Keratinocyte (primary cell): ENCODE measurements at regions of chr20 and their contacts with region 1.

Region 1: DNA sequence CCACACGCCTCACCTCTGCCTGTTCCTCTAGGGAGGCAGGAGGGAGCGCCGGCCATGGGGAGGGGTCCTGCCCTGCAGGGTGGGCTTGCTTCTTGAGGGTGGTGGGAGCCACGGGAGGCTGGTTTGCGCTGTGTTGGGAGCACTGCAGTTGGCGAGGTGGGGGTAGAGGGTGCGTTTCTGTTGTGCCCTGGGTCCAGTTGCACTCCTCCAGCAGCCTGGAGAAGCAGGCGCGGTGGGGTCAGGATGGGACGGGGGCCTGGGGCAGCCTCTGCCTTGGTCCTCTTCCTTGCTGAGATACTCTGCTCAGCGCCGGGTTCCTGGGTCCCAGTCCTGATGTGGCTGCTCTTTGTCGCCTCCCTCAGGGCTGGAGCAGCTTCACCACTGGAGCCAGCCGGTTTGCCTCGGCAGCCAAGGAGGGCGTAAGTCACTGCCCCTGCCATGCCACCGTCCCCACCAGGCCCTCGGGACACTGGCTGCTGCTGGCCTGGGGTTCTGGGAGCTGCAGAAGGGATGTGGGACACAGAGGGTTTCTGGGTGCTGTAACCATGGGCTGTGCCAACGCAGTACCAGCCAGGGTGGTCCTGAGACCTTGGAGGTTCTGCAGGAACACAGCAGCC is 8.4 kb downstream of the ARFGAP1 start:
- DNase-seq: no peak
- H3K4me3 ChIP-seq: no peak overlapping the region
- H3K27ac ChIP-seq: no peak overlapping the region
- H3K4me1 ChIP-seq: no peaks in the 10 kb centered on the region
- H3K27me3 ChIP-seq: no peaks in the 10 kb centered on the region
- CTCF ChIP-seq: peak; percentile 31 to 46 (median 43)

Region 2: GRCh38 chr20:63223221-63224207 is 57.5 kb before region 1 on chr20:
- dilution Hi-C with region 1: loop called (anchors 10 kb)
- DNase-seq: no peak
- H3K4me3 ChIP-seq: no peak overlapping the region
- H3K27ac ChIP-seq: no peak overlapping the region
- H3K4me1 ChIP-seq: no peaks in the 10 kb centered on the region
- H3K27me3 ChIP-seq: peaks cover 13% of the 10 kb centered on the region
- CTCF ChIP-seq: peak; percentile 80 to 88 (median 83)

Region 3: DNA sequence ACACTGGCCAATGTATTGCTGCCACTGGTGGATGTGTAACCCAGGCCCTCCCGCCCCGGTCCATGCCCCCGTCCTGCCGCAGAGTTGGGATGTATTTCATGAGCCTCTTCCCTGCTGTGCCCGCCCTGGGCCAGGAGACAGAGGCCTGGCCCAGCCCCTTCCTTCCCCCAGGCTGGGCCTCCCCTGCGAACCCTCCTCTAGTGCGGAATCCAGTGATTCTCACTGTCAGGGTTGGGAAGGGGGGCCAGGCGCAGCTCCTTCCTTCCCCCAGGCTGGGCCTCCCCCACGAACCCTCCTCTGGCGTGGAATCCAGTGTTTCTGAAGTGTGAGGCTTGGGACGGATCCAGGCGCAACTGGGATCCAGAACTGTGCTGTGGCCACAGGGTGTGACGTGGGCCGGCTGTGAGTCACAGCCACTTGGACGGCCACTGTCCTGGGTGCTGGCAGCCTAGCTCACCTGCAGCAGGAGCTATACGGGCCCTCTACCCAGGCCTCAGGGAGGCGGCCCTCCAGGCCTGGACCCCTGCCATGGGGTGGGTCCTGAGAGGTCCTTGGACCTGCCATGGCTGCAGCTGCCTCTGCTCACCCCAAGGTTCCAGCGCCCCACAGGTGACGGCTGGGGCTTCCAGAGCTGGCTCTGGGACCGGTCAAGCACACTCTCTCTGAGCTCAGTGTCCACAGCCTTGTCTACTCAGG is 40.2 kb after region 1 on chr20:
- dilution Hi-C with region 1: no loop called
- DNase-seq: no peak
- H3K4me3 ChIP-seq: no peak overlapping the region
- H3K27ac ChIP-seq: no peak overlapping the region
- H3K4me1 ChIP-seq: no peaks in the 10 kb centered on the region
- H3K27me3 ChIP-seq: peaks cover 22% of the 10 kb centered on the region
- CTCF ChIP-seq: no peak